PC-9 (cell line): ENCODE measurements at regions of chr20 and their contacts with region 1.

Region 1: GRCh38 chr20:25076731-25077609 is 5.0 kb downstream of the VSX1 start:
- DNase-seq: peak; percentile 93 to 95
- H3K4me3 ChIP-seq: peak overlapping the region; percentile 54; the same call in 1 of the 2 replicates
- H3K27ac ChIP-seq: peak overlapping the region; percentile 77
- H3K4me1 ChIP-seq: peaks cover 70% of the 10 kb centered on the region
- H3K27me3 ChIP-seq: no peaks in the 10 kb centered on the region
- CTCF ChIP-seq: peak; percentile 44; the same call in 1 of the 2 replicates

Region 2: GRCh38 chr20:24934101-24934661 is 142.8 kb before region 1 on chr20:
- CTCF ChIA-PET with region 1: no interaction called
- POLR2A ChIA-PET with region 1: no interaction called
- intact Hi-C with region 1: loop called (anchors 10 kb)
- DNase-seq: no peak
- H3K4me3 ChIP-seq: no peak overlapping the region
- H3K27ac ChIP-seq: no peak overlapping the region
- H3K4me1 ChIP-seq: peaks cover 27% of the 10 kb centered on the region
- H3K27me3 ChIP-seq: no peaks in the 10 kb centered on the region
- CTCF ChIP-seq: no peak

Region 3: GRCh38 chr20:25136643-25137559 is 59.9 kb after region 1 on chr20:
- CTCF ChIA-PET with region 1: no interaction called
- POLR2A ChIA-PET with region 1: no interaction called
- intact Hi-C with region 1: loop called (anchors 5 kb)
- DNase-seq: peak; percentile 84 to 88
- H3K4me3 ChIP-seq: no peak overlapping the region
- H3K27ac ChIP-seq: peak overlapping the region; percentile 58
- H3K4me1 ChIP-seq: peaks cover 22% of the 10 kb centered on the region
- H3K27me3 ChIP-seq: no peaks in the 10 kb centered on the region
- CTCF ChIP-seq: no peak

Region 4: GRCh38 chr20:25254986-25255680 is 178.2 kb after region 1 on chr20:
- CTCF ChIA-PET with region 1: no interaction called
- POLR2A ChIA-PET with region 1: no interaction called
- intact Hi-C with region 1: loop called (anchors 5 kb)
- DNase-seq: peak in 1 of 2 experiments; percentile 89
- H3K4me3 ChIP-seq: no peak overlapping the region; the same call in 1 of the 2 replicates
- H3K27ac ChIP-seq: peak overlapping the region; percentile 86; the same call in 1 of the 2 replicates
- H3K4me1 ChIP-seq: peaks cover 65% of the 10 kb centered on the region
- H3K27me3 ChIP-seq: no peaks in the 10 kb centered on the region
- CTCF ChIP-seq: no peak